ENCODE measurements at regions of chr20 and their contacts with region 1.

Region 1: GRCh38 chr20:9616833-9617489 is 102.6 kb downstream of the LAMP5 start:
- DNase-seq: peak; percentile 66
- ATAC-seq: peak; percentile 81
- H3K4me3 ChIP-seq: no peak overlapping the region
- H3K27ac ChIP-seq: no peak overlapping the region
- H3K4me1 ChIP-seq: no peaks in the 10 kb centered on the region
- H3K27me3 ChIP-seq: peaks cover 17% of the 10 kb centered on the region
- CTCF ChIP-seq: peak; percentile 93
- POLR2A ChIP-seq: no peak
- RAD21 ChIP-seq: peak; percentile 87

Region 2: DNA sequence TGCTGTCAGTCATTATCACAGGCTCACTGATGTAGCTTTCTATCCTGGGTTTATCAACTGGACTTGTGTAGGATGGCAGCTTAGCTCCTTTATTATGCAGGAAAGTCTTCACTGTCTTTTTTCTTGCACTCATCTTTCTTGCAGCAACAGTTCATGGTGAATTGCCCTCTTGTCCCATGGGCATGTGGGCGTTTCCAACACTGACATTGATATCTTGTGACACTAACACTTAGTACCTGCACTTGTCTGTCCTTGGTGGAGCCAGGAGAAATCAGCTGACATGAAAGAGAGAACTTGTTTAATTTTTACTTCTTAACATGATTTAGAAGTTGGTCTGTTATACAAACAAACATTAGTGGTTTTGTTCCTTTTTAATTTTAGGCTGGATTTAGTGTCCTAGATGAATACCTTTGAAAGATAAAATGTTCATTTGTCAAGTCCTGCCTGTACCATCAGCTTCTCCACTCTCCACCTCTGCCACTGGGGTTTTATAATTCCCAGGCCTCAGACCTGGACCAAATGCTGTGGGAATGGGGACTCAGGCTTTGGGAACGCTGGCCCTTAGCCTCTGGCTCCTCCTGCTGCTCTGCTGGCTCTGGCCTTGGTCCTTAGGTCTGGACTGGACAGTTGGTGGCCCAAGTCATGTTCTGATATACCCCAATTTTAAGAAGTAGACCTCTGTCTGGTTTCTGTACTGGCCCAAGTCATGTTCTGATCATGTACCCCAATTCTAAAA is 263.6 kb before region 1 on chr20:
- CTCF ChIA-PET with region 1: no interaction called
- POLR2A ChIA-PET with region 1: no interaction called
- dilution Hi-C with region 1: no loop called
- in situ Hi-C with region 1: no loop called
- intact Hi-C with region 1: no loop called
- DNase-seq: no peak
- ATAC-seq: peak; percentile 35
- H3K4me3 ChIP-seq: no peak overlapping the region
- H3K27ac ChIP-seq: no peak overlapping the region
- H3K4me1 ChIP-seq: peaks cover 12% of the 10 kb centered on the region
- H3K27me3 ChIP-seq: no peaks in the 10 kb centered on the region
- CTCF ChIP-seq: 0 out of 2 replicates have a peak, but pooled peaks have one; percentile 17
- POLR2A ChIP-seq: no peak
- RAD21 ChIP-seq: peak; percentile 29; the same call in 1 of the 2 replicates

Region 3: GRCh38 chr20:9500121-9500520 is 116.8 kb before region 1 on chr20:
- CTCF ChIA-PET with region 1: no interaction called
- POLR2A ChIA-PET with region 1: no interaction called
- dilution Hi-C with region 1: no loop called
- in situ Hi-C with region 1: no loop called
- intact Hi-C with region 1: no loop called
- DNase-seq: peak; percentile 16
- ATAC-seq: no peak
- H3K4me3 ChIP-seq: no peak overlapping the region
- H3K27ac ChIP-seq: no peak overlapping the region
- H3K4me1 ChIP-seq: no peaks in the 10 kb centered on the region
- H3K27me3 ChIP-seq: peaks cover 13% of the 10 kb centered on the region
- CTCF ChIP-seq: no peak
- POLR2A ChIP-seq: no peak
- RAD21 ChIP-seq: no peak

Region 4: GRCh38 chr20:9555781-9556180 is 61.2 kb before region 1 on chr20:
- CTCF ChIA-PET with region 1: no interaction called
- POLR2A ChIA-PET with region 1: no interaction called
- dilution Hi-C with region 1: no loop called
- in situ Hi-C with region 1: no loop called
- intact Hi-C with region 1: no loop called
- DNase-seq: peak; percentile 31
- ATAC-seq: no peak
- H3K4me3 ChIP-seq: no peak overlapping the region
- H3K27ac ChIP-seq: no peak overlapping the region
- H3K4me1 ChIP-seq: no peaks in the 10 kb centered on the region
- H3K27me3 ChIP-seq: peaks cover 1% of the 10 kb centered on the region
- CTCF ChIP-seq: no peak
- POLR2A ChIP-seq: no peak
- RAD21 ChIP-seq: no peak

Region 5: GRCh38 chr20:9723501-9724202 is 106.7 kb after region 1 on chr20:
- CTCF ChIA-PET with region 1: no interaction called
- POLR2A ChIA-PET with region 1: no interaction called
- dilution Hi-C with region 1: no loop called
- in situ Hi-C with region 1: loop called (anchors 25 kb)
- intact Hi-C with region 1: no loop called
- DNase-seq: no peak
- ATAC-seq: no peak
- H3K4me3 ChIP-seq: no peak overlapping the region
- H3K27ac ChIP-seq: no peak overlapping the region
- H3K4me1 ChIP-seq: no peaks in the 10 kb centered on the region
- H3K27me3 ChIP-seq: no peaks in the 10 kb centered on the region
- CTCF ChIP-seq: no peak
- POLR2A ChIP-seq: no peak
- RAD21 ChIP-seq: no peak

Region 6: DNA sequence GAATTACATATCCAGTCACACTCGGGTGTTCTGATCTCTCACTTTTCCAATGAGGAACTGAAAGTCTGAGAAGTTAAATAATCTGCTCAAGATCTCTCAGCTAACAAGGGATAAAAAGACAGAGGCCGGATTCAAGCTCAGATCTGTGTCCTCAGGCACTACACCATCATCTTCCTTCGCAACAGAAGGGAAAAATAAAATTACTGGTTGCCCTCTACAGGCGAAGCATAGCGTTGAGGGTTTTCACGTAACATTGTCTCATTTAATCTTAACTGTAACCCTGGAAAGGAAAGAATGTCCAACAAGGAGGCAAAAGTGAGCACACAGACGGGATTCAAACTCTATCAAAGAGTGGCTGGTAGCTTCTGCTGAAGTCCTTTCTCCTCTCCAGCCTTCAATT is 350.0 kb after region 1 on chr20:
- CTCF ChIA-PET with region 1: interaction called, 3 read pairs
- POLR2A ChIA-PET with region 1: no interaction called
- dilution Hi-C with region 1: no loop called
- in situ Hi-C with region 1: no loop called
- intact Hi-C with region 1: loop called (anchors 1 kb)
- DNase-seq: no peak
- ATAC-seq: peak; percentile 60
- H3K4me3 ChIP-seq: no peak overlapping the region
- H3K27ac ChIP-seq: no peak overlapping the region
- H3K4me1 ChIP-seq: no peaks in the 10 kb centered on the region
- H3K27me3 ChIP-seq: peaks cover 18% of the 10 kb centered on the region
- CTCF ChIP-seq: peak; percentile 20; the same call in 1 of the 2 replicates
- POLR2A ChIP-seq: no peak
- RAD21 ChIP-seq: no peak

Region 7: GRCh38 chr20:10225439-10226060 is 608.6 kb after region 1 on chr20:
- CTCF ChIA-PET with region 1: no interaction called
- POLR2A ChIA-PET with region 1: no interaction called
- dilution Hi-C with region 1: no loop called
- in situ Hi-C with region 1: no loop called
- intact Hi-C with region 1: loop called (anchors 10 kb)
- DNase-seq: no peak
- ATAC-seq: peak; percentile 68
- H3K4me3 ChIP-seq: no peak overlapping the region
- H3K27ac ChIP-seq: no peak overlapping the region
- H3K4me1 ChIP-seq: no peaks in the 10 kb centered on the region
- H3K27me3 ChIP-seq: no peaks in the 10 kb centered on the region
- CTCF ChIP-seq: 0 out of 2 replicates have a peak, but pooled peaks have one; percentile 18
- POLR2A ChIP-seq: no peak
- RAD21 ChIP-seq: no peak

Region 8: GRCh38 chr20:10654630-10655029 is 1037.7 kb after region 1 on chr20:
- CTCF ChIA-PET with region 1: no interaction called
- POLR2A ChIA-PET with region 1: no interaction called
- dilution Hi-C with region 1: no loop called
- in situ Hi-C with region 1: no loop called
- intact Hi-C with region 1: loop called (anchors 10 kb)
- DNase-seq: no peak
- ATAC-seq: no peak
- H3K4me3 ChIP-seq: no peak overlapping the region
- H3K27ac ChIP-seq: no peak overlapping the region
- H3K4me1 ChIP-seq: peaks cover 28% of the 10 kb centered on the region
- H3K27me3 ChIP-seq: no peaks in the 10 kb centered on the region
- CTCF ChIP-seq: no peak
- POLR2A ChIP-seq: no peak
- RAD21 ChIP-seq: no peak

Measured in IMR-90 (cell line).